Activated CD4-positive, alpha-beta T cell treated with anti-CD3 and anti-CD28 coated beads, Interleukin-2, amount 10 ng/mL, durations not matched to agents 24 days and 14 days (primary cell): ENCODE measurements at regions of chr15 and their contacts with region 1.

Region 1: DNA sequence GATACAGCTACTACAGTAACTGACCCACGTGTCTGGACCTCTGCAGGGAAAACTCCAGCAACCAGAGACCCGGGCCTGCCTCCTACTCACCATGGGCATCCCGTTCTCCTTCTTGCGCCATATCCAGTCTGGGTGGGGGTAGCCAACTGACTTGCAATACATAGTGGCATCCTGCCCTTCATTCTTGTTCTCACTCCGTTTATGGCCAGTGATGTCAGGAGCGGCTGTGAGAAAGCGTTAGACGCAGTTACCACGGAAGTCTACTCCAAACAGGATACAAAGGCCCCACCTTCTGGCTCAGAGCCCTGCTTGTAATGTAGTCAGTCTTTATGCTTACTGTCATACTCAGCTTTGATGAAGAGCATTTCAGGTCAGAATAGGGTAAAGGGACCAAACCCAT is 59.6 kb downstream of the NPTN start:
- DNase-seq: no peak
- H3K4me3 Mint-ChIP-seq: no peak overlapping the region
- H3K27ac Mint-ChIP-seq: no peak overlapping the region
- H3K4me1 Mint-ChIP-seq: peaks cover 29% of the 10 kb centered on the region
- H3K27me3 Mint-ChIP-seq: no peaks in the 10 kb centered on the region

Region 2: GRCh38 chr15:73518180-73518862 is 55.3 kb before region 1 on chr15:
- intact Hi-C with region 1: no loop called
- DNase-seq: no peak
- H3K4me3 Mint-ChIP-seq: no peak overlapping the region
- H3K27ac Mint-ChIP-seq: no peak overlapping the region
- H3K4me1 Mint-ChIP-seq: peaks cover 5% of the 10 kb centered on the region
- H3K27me3 Mint-ChIP-seq: peaks cover 14% of the 10 kb centered on the region

Region 3: DNA sequence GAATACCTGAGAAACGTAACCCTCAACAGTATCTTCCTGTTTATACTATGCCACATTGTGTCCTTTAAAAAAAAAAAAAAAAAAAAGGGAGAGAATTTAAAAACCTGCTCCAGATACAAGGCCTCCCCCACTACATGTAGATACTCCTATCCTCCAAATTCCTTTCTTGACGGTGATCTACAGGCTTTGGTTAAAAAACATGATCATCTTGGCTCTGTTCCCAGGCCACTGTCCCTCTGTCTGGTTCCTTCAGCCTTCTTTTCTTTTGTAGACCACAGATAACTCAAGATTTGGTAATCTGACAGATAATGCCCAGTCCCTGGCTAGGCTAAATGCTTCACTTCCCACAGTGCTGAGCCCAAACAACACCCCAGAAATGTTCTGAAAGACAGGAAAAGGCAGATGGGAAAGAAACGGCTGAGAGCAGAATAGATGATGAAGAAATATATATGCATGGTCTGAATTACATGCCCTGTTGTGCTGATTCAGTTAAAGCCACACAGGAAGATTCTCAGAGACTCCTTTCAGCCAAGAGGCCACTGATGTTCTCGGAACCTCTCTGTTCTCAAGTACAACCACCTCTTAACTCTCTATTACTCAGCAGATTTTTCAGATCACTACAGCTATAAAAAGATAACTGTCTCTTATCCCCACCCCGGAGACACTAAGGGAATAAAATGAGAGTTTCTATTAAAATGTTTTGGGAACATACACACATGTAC is 11.3 kb after region 1 on chr15:
- intact Hi-C with region 1: loop called (anchors 1 kb)
- DNase-seq: no peak
- H3K4me3 Mint-ChIP-seq: peak overlapping the region; percentile 5
- H3K27ac Mint-ChIP-seq: no peak overlapping the region
- H3K4me1 Mint-ChIP-seq: peaks cover 39% of the 10 kb centered on the region
- H3K27me3 Mint-ChIP-seq: no peaks in the 10 kb centered on the region

Region 4: DNA sequence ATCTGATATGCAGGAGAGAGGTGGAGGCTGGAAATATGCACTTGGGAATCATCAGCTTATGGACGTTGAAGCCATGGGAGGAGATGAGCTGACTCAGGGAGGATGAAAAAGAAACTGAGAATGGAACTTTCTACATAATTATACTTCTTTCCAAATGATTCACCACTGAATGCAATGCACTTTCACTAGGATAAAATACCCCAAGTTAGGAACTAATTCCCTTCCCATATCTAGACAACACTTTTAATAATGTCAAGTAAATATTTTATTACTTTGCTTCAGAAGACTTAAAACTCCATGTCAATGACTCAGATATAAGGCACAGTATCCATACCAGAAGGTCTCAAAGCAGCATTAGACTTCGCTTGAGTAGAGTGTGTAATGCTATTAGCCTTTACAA is 35.4 kb after region 1 on chr15:
- intact Hi-C with region 1: loop called (anchors 5 kb)
- DNase-seq: no peak
- H3K4me3 Mint-ChIP-seq: no peak overlapping the region
- H3K27ac Mint-ChIP-seq: no peak overlapping the region
- H3K4me1 Mint-ChIP-seq: peaks cover 30% of the 10 kb centered on the region
- H3K27me3 Mint-ChIP-seq: no peaks in the 10 kb centered on the region